Dorsolateral prefrontal cortex (tissue), 120 donors: ENCODE measurements at regions of chr12 and their contacts with region 1.

Region 1: GRCh38 chr12:42325653-42326474 is at the starts of genes PPHLN1 and ZCRB1:
- DNase-seq: peak; percentile 73 to 90 (median 84)
- H3K4me3 ChIP-seq: peak within 1 kb of the TSS; percentile 65 to 97 (median 84)
- H3K27ac ChIP-seq: peak within 1 kb of the TSS; percentile 10 to 96 (median 83)
- H3K27me3 ChIP-seq: no peaks in the 10 kb centered on the region
- CTCF ChIP-seq: peak in 9 of 56 donors; percentile 6 to 26 (median 14)
- total RNA-seq, gene PPHLN1: 45.3 to 89.6 (median 68.0) TPM
- total RNA-seq, gene ZCRB1: 36.1 to 82.9 (median 59.0) TPM

Region 2: DNA sequence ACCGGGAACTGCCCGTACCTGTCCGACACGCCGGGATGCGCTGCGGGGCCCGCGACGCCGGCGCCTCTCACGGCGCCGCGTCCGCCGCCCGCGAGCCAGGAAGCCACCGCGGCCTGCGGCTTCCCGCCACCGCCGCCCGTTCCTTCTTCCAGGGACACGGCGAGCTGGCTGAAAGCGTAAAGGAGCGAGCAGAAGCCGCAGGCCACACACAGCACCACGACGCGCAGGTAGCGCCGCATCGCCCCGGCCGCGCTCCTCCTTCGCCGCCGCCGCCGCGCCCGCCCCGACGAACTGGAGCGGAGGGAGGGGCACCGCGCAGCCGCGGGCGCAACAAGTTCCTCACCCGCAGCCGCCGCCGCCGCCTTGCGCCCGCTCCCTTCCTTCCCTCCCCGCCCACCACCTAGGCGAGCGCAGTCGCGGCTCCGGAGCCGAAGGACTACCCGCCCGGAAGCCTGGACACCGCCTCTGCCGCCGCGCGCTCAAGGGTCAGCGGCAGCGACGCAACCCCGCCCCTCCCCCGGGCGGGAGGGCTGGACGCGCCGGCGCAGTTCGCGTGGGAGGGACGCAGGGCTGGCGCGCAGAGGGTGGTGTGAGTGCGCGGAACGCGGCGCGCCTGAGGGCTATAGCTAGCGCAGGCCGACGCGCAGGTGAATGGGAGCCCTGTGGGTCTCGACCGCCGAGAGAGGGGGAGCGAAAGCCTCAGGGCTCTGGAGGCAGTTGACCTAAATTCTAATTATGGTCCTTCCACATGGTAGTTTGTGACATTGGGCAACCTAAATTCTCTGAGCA is 181.3 kb before region 1 on chr12 and contains the start of gene GXYLT1:
- intact Hi-C with region 1: loop called (anchors 5 kb)
- DNase-seq: peak; percentile 60 to 92 (median 82)
- H3K4me3 ChIP-seq: peak within 1 kb of the TSS; percentile 57 to 92 (median 78)
- H3K27ac ChIP-seq: peak within 1 kb of the TSS in 58 of 59 donors; percentile 40 to 93 (median 79)
- H3K27me3 ChIP-seq: no peaks in the 10 kb centered on the region
- CTCF ChIP-seq: peak in 21 of 56 donors; percentile 6 to 57 (median 22)
- total RNA-seq, gene GXYLT1: 5.8 to 13.8 (median 9.8) TPM

Region 3: DNA sequence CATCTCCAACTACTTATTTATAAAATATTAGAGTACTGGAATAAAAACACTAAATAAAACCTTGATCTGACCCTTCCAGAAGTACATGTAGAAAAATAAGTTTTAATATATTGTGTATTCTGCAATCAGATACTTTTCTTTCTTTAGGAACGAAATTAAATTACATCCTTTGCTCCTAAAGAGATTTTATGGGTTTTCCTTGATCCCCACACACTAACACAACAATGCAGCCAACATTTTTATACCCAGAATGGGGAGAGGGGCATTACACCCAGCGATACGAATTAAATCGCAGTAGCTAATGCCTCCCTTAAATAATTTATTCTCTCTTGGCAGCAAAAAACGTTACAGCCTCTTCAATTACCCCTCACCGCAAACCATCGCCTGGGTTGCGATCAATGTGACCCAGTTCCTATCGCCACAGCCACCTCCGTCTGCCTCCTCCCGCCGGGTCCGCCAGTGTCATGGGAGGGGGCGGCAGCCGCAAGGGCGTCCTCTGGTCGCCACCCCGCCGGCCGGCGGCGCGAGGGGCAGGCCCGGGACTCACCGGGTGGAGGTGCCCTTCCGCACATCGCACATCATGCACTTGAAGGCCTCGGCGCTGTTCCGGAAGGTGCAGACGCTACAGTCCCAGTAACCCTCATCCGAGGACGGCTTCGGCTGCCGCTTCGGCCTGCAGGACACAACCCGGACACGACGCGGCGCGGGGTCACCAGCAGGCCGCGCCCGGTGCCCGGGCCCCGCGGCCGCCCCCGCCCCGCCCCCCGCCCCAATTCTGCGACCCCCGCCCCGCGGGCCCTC is 88.6 kb before region 1 on chr12:
- intact Hi-C with region 1: loop called (anchors 2 to 5 kb)
- DNase-seq: peak; percentile 44 to 71 (median 58)
- H3K4me3 ChIP-seq: peak overlapping the region; percentile 61 to 95 (median 86)
- H3K27ac ChIP-seq: peak overlapping the region in 58 of 59 donors; percentile 30 to 97 (median 87)
- H3K27me3 ChIP-seq: no peaks in the 10 kb centered on the region
- CTCF ChIP-seq: peak in 29 of 56 donors; percentile 7 to 55 (median 26)

Region 4: GRCh38 chr12:42277396-42278127 is 48.3 kb before region 1 on chr12:
- intact Hi-C with region 1: no loop called
- DNase-seq: no peak
- H3K4me3 ChIP-seq: no peak overlapping the region
- H3K27ac ChIP-seq: no peak overlapping the region
- H3K27me3 ChIP-seq: no peaks in the 10 kb centered on the region
- CTCF ChIP-seq: no peak